ENCODE measurements at regions of chr19 and their contacts with region 1.

Region 1: DNA sequence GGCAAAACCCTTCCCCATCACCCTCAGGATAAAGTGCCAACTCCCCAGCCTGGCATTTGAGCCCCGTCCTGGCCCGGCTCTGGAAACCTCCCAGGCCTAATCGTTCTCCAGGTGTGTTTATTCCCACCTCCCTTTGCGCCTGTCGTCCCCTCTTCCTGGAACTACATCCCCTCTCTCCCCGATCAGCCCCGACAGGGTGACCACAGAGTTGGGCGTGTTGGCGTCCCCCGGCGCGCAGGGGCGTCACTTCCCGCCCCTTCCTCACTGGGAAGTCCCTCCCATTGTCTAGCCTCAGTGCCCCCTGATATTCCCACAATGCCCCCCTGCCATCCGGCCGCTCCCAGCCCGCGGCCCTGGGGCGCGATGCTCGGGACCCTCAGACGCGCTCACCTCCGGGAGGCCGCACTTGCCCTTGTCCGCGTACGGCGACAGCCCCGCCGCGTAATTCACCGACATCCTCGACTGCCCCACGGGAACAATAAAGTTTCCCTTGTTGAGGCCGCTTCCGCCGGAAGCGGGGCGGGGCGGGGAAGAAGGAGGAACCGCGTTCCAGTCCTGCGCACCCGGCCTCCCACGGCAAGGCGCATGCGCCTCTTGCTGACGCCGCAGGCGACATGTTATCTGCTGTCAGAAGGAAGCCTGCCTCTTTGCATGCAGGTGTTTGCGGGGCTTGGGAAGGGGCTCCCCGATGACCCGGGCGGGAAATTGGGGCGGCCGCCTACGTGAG is at the starts of genes ANKRD24 and SIRT6:
- DNase-seq: peak; percentile 92 to 95
- ATAC-seq: peak; percentile 86 to 94
- H3K4me3 ChIP-seq: peak within 1 kb of the TSS; percentile 83 to 98 (median 96)
- H3K27ac ChIP-seq: peak within 1 kb of the TSS; percentile 87 to 96 (median 90)
- H3K4me1 ChIP-seq: peaks cover 28 to 29% of the 10 kb centered on the region in 2 donors
- H3K27me3 ChIP-seq: no peaks in the 10 kb centered on the region
- CTCF ChIP-seq: peak in 1 of 5 experiments; percentile 5
- POLR2A ChIP-seq: peak; percentile 82 to 83
- total RNA-seq, gene ANKRD24: 0.13 to 3.0 (median 0.45) TPM
- total RNA-seq, gene SIRT6: 11.7 to 25.7 (median 13.7) TPM

Region 2: DNA sequence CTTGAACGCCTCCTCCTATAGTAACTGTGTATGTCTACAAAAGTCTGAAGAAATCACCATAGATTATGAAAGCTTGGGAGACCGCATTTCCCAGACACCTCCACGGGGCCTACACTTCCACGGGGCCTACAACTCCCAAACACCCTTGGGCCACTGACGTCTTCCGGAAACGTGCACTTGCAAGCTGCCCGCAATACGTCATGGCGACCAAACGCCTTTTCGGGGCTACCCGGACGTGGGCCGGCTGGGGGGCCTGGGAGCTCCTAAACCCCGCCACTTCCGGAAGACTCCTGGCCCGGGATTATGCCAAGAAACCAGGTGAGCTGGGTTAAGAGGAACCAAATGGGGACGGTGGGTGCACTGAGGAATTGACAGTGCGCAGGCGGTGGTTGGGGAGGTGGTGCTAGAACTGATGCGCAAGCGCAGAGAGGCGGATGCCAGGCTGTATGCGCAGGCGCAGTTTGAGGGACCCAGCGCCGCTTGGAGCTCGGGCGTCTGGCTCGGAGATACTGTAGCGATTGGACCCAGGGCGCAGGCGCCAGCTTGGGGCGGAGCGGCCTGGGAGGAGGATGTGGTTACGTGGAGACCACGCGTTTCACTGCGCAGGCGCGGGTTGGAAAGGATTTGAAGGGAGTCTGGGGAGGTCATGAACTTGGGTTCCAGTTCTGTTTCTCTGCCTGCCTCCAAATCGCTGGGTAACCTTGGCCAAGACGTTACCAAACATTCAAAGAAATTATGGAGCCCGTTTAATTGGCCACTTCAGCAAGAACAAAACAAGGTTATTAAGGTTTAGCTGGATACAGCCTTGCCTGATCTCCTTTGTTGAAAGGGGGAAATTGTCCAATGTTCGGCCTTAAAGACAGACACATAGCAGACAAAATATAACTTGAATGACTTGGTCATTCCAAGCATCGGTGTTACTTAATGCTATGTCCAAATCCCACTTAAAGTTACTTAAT is 419.5 kb before region 1 on chr19 and contains the start of gene MRPL54:
- in situ Hi-C with region 1: no loop called
- intact Hi-C with region 1: loop called (anchors 5 kb)
- DNase-seq: peak; percentile 98 to 99
- ATAC-seq: peak; percentile 95 to 96
- H3K4me3 ChIP-seq: peak within 1 kb of the TSS; percentile 83 to 97 (median 90)
- H3K27ac ChIP-seq: peak within 1 kb of the TSS; percentile 92 to 100 (median 98)
- H3K4me1 ChIP-seq: peaks cover 21 to 22% of the 10 kb centered on the region in 2 donors
- H3K27me3 ChIP-seq: no peaks in the 10 kb centered on the region
- CTCF ChIP-seq: no peak
- POLR2A ChIP-seq: peak; percentile 68 to 78
- total RNA-seq, gene MRPL54: 23.3 to 86.3 (median 63.3) TPM

Region 3: GRCh38 chr19:4123615-4124568 is 58.4 kb before region 1 on chr19 and contains the start of gene MAP2K2:
- in situ Hi-C with region 1: no loop called
- intact Hi-C with region 1: loop called (anchors 5 kb)
- DNase-seq: peak; percentile 90 to 92
- ATAC-seq: peak; percentile 95 to 97
- H3K4me3 ChIP-seq: peak within 1 kb of the TSS; percentile 78 to 98 (median 90)
- H3K27ac ChIP-seq: peak within 1 kb of the TSS; percentile 77 to 86 (median 82)
- H3K4me1 ChIP-seq: peaks cover 8 to 17% of the 10 kb centered on the region in 2 donors
- H3K27me3 ChIP-seq: no peaks in the 10 kb centered on the region
- CTCF ChIP-seq: peak in 3 of 5 experiments; percentile 5 to 33 (median 9)
- POLR2A ChIP-seq: peak; percentile 45 to 73
- total RNA-seq, gene MAP2K2: 101 to 207 (median 138) TPM

Region 4: DNA sequence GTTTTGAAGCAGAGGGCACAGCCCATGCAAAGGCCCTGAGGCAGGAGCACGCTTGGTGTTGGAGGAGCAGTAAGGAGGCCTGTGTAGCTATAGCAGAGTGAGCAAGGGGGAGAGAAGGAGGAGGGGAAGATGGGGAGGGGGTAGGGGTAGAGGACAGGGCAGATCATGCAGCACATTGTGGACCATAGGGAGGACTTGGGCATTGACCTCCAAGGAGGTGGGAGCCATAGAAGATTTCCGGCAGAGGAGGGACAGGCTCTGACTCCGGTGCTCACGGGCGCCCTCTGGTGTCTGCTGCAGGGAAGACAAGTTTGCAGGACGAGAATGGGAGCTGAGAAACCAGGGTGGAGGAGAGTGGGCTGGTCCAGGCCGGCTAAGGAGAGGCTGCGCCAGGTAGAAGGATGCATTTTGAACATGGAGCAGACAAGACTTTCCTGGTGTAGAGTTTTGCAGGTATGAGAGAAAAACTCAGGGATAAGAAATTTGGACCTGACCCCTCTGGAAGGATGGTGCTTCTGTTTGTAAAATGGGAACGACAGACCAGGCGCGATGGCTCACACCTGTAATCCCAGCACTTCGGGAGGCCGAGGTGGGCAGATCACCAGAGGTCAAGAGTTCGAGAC is 42.5 kb before region 1 on chr19:
- in situ Hi-C with region 1: no loop called
- intact Hi-C with region 1: loop called (anchors 5 kb)
- DNase-seq: peak; percentile 37 to 63
- ATAC-seq: peak; percentile 62 to 87
- H3K4me3 ChIP-seq: no peak overlapping the region
- H3K27ac ChIP-seq: no peak overlapping the region
- H3K4me1 ChIP-seq: peaks cover 0 to 4% of the 10 kb centered on the region in 2 donors
- H3K27me3 ChIP-seq: no peaks in the 10 kb centered on the region
- CTCF ChIP-seq: peak; percentile 42 to 85 (median 71)
- POLR2A ChIP-seq: no peak

Region 5: GRCh38 chr19:4246767-4247593 is 64.7 kb after region 1 on chr19 and contains the start of gene YJU2:
- in situ Hi-C with region 1: no loop called
- intact Hi-C with region 1: loop called (anchors 1 kb)
- DNase-seq: peak; percentile 98 to 99
- ATAC-seq: peak; percentile 99
- H3K4me3 ChIP-seq: peak within 1 kb of the TSS; percentile 57 to 87 (median 76)
- H3K27ac ChIP-seq: peak within 1 kb of the TSS; percentile 85 to 99 (median 95)
- H3K4me1 ChIP-seq: peaks cover 7 to 11% of the 10 kb centered on the region in 2 donors
- H3K27me3 ChIP-seq: peaks cover 0 to 3% (median 0%) of the 10 kb centered on the region in 3 donors
- CTCF ChIP-seq: peak in 4 of 5 experiments; percentile 23 to 38 (median 34)
- POLR2A ChIP-seq: peak; percentile 36 to 42
- total RNA-seq, gene YJU2: 13.5 to 37.8 (median 19.9) TPM